Sciatic nerve (tissue), 2 donors: ENCODE measurements at regions of chr3 and their contacts with region 1.

Region 1: GRCh38 chr3:185942907-185943759 is 5.3 kb upstream of the TRA2B start:
- DNase-seq: peak; percentile 86
- ATAC-seq: peak; percentile 93

Region 2: DNA sequence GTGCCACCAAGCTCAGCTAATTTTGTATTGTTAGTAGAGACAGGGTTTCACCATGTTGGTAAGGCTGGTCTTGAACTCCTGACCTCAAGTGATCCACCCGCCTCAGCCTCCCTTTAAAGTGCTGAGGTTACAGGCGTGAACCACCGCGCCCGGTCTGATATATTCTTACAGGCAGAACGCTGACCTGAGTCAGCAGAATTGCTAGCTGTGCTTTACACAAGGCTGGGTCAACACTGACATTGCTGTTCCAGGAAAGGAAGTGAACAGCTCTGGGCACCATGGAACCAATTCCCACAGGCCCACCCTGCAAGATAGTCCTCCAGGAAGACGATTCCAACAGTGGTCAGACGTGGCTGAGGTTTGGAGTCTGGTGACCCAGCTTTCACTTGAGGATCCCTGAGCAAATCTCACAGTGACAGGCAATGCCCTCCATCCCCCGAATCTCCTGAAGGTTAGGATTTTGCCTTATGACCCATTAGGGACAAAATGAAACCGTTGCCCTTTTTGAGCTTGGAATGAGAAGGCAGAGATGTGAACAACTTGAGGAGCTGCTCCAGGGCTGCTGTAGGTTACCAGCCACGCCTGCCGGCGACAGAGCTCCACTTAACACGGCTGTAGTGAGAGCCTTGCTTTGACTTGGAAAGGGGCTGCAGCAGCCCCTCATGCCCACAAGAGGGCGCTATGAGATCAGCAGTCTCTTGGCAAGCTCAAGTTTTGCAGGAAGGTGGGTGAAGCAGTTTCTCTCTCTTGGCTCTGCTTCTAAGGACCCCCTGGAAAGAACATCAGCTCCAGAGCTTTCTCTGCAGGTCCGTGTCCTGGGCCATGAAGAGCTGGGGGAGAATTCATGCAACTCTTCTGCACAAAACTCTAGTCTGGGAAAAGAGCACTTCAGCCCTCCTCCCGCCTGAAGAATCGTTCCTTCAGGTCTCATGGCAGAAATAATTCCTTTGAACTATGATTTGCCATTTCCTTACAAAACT is 282.9 kb before region 1 on chr3:
- intact Hi-C with region 1: loop called (anchors 10 kb)
- DNase-seq: peak; percentile 88
- ATAC-seq: peak; percentile 43